Endothelial cell of umbilical vein (primary cell): ENCODE measurements at regions of chr9 and their contacts with region 1.

Region 1: DNA sequence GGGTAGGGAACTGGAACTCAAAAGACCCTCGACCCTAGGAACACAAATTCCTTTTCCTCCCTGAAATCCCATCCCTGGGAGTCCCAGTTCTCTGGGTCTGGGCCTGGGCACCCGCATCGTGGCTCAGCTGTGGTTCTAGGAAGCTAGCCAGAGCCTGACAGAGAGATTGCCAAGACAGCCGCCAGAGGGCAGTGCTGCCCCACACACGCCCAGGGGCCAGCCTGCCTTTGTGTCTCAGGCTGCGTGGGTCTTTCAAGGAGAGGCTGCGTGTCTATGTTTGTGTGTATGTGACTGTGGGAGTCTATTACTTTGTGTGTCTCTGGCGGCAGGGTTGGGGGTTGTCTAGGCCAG is 32.0 kb upstream of the TTLL11 start:
- DNase-seq: peak; percentile 77
- H3K4me3 ChIP-seq: no peak overlapping the region
- H3K27ac ChIP-seq: no peak overlapping the region
- H3K4me1 ChIP-seq: peaks cover 20% of the 10 kb centered on the region
- H3K27me3 ChIP-seq: no peaks in the 10 kb centered on the region
- CTCF ChIP-seq: peak; percentile 85 to 95
- POLR2A ChIP-seq: no peak

Region 2: DNA sequence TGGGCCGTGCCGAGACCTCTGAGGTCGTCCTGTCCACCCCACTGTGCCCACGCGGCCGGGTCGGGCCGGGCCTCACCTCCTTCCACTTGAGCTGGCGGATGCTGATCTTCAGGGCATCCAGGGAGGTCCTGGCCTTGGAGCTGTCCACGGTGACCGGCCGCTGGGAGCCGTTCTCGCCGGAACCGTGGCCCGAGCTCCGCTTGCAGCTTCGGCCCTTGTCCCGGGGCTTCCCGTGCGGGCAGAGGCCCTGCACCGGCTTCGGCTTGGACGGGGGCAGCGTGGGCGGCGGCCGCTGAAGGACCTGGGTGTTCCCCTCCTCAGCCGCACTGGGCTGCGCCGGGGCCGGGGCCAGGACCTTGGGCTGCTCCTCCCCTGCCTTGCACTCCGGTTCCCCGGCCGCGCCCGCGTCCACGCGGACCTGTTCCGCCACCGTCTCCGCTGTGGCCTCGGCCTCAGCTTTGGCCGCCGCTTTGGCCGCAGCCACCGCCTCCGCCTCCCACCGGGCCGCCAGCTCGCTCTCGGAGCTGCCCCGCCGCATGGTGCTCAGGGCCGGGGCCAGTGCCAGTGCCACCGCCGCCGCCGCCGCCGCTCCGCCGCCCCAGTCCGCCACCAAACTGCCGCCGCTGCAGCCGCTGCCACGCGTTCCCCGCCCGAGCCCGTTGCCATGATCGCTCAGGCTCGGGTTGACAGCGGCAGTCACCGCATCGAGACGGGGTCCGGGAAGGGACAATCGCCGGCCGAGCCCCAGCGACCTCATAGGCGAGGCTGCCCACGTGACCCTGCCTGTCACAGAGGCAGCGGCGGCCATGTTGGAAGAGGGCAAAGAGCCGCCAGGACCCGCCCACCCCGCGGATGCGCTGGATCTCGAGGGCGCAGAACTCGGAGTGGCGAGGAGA is 32.3 kb before region 1 on chr9 and contains the start of gene TTLL11:
- CTCF ChIA-PET with region 1: interaction called, 331 read pairs
- POLR2A ChIA-PET with region 1: no interaction called
- dilution Hi-C with region 1: no loop called
- intact Hi-C with region 1: no loop called
- DNase-seq: peak; percentile 93
- H3K4me3 ChIP-seq: peak within 1 kb of the TSS; percentile 74 to 82 (median 78)
- H3K27ac ChIP-seq: no peak within 1 kb of the TSS
- H3K4me1 ChIP-seq: peaks cover 11% of the 10 kb centered on the region
- H3K27me3 ChIP-seq: peaks cover 0 to 2% of the 10 kb centered on the region in 2 experiments
- CTCF ChIP-seq: no peak
- POLR2A ChIP-seq: peak; percentile 56
- total RNA-seq, gene TTLL11: 4.9 and 8.1 TPM in 2 replicates

Region 3: DNA sequence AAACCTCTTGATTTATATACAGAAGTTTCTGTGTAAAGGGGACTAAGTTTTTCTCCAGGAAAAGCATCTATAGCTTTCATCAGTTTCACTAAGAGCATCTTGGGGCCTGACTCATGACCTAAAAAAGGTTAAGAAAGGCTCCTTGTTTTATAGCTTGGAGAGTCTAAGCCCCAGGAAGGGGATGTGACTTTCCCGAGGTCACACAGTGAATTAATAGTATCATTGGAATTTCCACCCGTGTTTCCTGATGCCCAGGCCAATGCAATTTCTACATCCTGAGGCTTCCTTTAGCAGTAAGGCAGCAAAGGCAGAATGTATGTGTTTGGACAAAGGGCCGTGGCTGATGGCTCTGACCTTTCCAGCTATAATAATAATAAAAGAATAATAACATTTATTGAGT is 43.2 kb after region 1 on chr9:
- CTCF ChIA-PET with region 1: interaction called, 9 read pairs
- POLR2A ChIA-PET with region 1: no interaction called
- dilution Hi-C with region 1: no loop called
- intact Hi-C with region 1: loop called (anchors 2 kb)
- DNase-seq: peak; percentile 73
- H3K4me3 ChIP-seq: no peak overlapping the region
- H3K27ac ChIP-seq: no peak overlapping the region
- H3K4me1 ChIP-seq: peaks cover 18% of the 10 kb centered on the region
- H3K27me3 ChIP-seq: peaks cover 16 to 30% of the 10 kb centered on the region in 2 experiments
- CTCF ChIP-seq: no peak
- POLR2A ChIP-seq: no peak

Region 4: DNA sequence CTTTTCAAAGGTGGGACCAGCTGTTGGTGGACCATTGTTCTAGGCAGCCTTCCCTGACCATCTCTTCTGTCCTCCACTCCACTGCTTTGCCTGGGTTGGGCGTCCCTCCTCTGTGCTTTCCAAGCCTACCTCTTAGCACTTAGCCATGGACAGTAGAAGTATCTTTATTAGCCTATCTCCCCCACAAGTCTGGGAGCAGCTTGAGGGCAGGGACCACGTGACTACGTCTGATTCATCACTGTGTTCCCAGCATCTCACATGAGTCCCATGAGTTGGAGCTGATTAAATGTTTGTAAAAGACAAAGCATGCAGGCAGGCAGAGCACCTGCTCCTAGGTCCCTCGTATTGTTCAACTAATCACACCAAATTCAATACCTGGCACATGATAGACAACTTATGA is 55.5 kb after region 1 on chr9:
- CTCF ChIA-PET with region 1: no interaction called
- POLR2A ChIA-PET with region 1: no interaction called
- dilution Hi-C with region 1: no loop called
- intact Hi-C with region 1: no loop called
- DNase-seq: peak; percentile 27
- H3K4me3 ChIP-seq: no peak overlapping the region
- H3K27ac ChIP-seq: no peak overlapping the region
- H3K4me1 ChIP-seq: no peaks in the 10 kb centered on the region
- H3K27me3 ChIP-seq: peaks cover 12 to 30% of the 10 kb centered on the region in 2 experiments
- CTCF ChIP-seq: no peak
- POLR2A ChIP-seq: no peak

Region 5: GRCh38 chr9:122254761-122255160 is 129.6 kb after region 1 on chr9:
- CTCF ChIA-PET with region 1: interaction called, 9 read pairs
- POLR2A ChIA-PET with region 1: no interaction called
- dilution Hi-C with region 1: no loop called
- intact Hi-C with region 1: loop called (anchors 1 kb)
- DNase-seq: no peak
- H3K4me3 ChIP-seq: peak overlapping the region in 1 of 3 experiments; percentile 33
- H3K27ac ChIP-seq: peak overlapping the region; percentile 88
- H3K4me1 ChIP-seq: peaks cover 37% of the 10 kb centered on the region
- H3K27me3 ChIP-seq: no peaks in the 10 kb centered on the region
- CTCF ChIP-seq: no peak
- POLR2A ChIP-seq: no peak

Region 6: DNA sequence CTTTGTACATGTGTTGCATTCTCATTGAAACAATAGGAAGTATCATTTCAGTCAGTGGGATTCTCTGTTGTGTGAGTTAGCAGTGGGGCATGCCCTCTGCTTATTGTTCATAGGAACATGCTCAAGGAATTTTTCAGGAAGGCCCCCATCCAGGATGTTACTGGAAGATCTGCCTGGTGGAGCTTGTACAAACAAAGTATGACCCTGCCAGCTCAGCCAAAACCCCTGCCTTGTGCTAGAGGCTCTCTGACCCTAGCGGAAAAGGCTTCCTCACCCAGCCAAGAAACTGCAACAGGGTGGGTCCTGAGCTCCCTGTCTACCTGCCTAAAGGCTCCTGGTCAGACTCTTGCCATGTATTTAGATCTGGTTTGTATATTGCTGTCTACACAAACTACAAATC is 182.8 kb after region 1 on chr9:
- CTCF ChIA-PET with region 1: interaction called, 20 read pairs
- POLR2A ChIA-PET with region 1: interaction called, 3 read pairs
- dilution Hi-C with region 1: no loop called
- intact Hi-C with region 1: loop called (anchors 1 kb)
- DNase-seq: peak; percentile 92
- H3K4me3 ChIP-seq: no peak overlapping the region
- H3K27ac ChIP-seq: peak overlapping the region; percentile 84
- H3K4me1 ChIP-seq: peaks cover 53% of the 10 kb centered on the region
- H3K27me3 ChIP-seq: no peaks in the 10 kb centered on the region
- CTCF ChIP-seq: no peak
- POLR2A ChIP-seq: no peak

Region 7: GRCh38 chr9:122562134-122562760 is 437.1 kb after region 1 on chr9:
- CTCF ChIA-PET with region 1: no interaction called
- POLR2A ChIA-PET with region 1: no interaction called
- dilution Hi-C with region 1: no loop called
- intact Hi-C with region 1: no loop called
- DNase-seq: no peak
- H3K4me3 ChIP-seq: no peak overlapping the region
- H3K27ac ChIP-seq: no peak overlapping the region
- H3K4me1 ChIP-seq: no peaks in the 10 kb centered on the region
- H3K27me3 ChIP-seq: no peaks in the 10 kb centered on the region
- CTCF ChIP-seq: no peak
- POLR2A ChIP-seq: no peak

Region 8: DNA sequence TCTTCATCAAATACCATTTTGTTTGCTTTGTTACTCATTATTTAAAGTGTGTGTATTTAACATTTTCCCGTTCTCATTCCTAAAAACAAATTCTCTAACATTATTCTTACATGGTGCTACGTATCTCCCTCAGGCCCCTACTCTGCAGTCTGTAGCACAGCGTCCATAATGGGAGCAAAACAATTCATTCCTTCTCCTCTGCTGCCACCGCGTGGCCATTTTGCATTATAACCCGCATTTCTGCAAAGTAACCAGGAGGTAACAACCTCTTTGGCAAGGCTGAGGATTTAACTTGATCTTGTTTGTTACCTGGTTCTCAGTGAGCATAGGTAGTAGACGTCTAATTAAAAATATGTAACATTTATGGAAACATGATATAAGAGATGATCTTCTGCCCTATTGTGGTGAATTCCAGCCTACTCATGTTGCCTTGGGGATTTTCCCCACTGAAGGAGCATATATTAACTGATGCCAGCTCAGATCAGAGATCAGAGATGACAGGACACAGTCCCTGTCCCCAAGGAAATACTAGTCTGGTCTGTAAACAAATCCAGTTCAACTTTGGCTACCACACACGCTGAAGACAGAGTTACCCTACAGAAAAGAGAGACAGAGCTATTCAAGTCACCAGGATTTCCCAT is 685.3 kb after region 1 on chr9:
- CTCF ChIA-PET with region 1: interaction called, 11 read pairs
- POLR2A ChIA-PET with region 1: no interaction called
- dilution Hi-C with region 1: no loop called
- intact Hi-C with region 1: loop called (anchors 1 kb)
- DNase-seq: peak; percentile 87
- H3K4me3 ChIP-seq: no peak overlapping the region
- H3K27ac ChIP-seq: no peak overlapping the region
- H3K4me1 ChIP-seq: peaks cover 10% of the 10 kb centered on the region
- H3K27me3 ChIP-seq: no peaks in the 10 kb centered on the region
- CTCF ChIP-seq: peak; percentile 45 to 79
- POLR2A ChIP-seq: no peak